B cell (primary cell): ENCODE measurements at regions of chr11 and their contacts with region 1.

Region 1: DNA sequence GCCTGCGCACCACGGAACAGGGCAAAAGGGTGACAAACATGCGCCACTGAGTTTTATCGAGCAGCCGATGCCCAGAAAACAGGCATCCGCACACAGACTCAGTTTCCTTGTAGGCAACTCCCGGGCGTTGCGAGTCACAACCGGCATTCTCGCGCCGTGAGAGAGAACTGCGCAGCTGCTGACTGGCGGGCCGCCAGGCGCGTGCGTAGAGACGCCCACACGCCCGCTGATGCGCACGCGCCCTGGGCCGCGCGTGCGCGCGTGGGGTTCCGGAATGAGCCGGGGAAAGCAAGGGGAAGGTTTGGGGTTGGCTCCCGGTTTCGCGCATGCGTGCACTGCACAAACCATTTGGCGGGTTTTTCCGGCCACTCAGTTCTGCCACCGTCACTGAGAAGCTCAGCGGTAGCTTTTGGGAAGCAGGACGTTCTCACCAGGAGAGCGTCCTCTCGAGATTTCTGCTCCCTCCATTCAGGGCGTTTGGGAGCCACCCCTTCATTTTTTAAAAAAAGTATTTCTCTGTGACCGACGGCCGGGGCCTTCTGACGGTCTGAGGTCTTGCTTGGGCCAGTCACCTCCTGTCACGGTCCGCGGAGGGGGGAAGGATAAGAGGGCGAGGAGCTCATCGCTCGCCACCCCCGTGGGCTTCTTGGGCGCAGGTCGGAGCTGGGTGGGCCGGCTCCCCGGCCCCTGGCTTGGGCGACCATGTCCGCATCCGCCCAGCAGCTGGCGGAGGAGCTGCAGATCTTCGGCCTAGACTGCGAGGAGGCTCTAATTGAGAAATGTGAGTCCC is at the start of gene POLA2:
- DNase-seq: peak; percentile 98
- ATAC-seq: peak; percentile 88
- H3K4me3 ChIP-seq: peak within 1 kb of the TSS; percentile 85 to 97 (median 94)
- H3K4me3 Mint-ChIP-seq: peak within 1 kb of the TSS; percentile 94
- H3K27ac ChIP-seq: peak within 1 kb of the TSS; percentile 88 to 91
- H3K27ac Mint-ChIP-seq: peak within 1 kb of the TSS; percentile 99
- H3K4me1 ChIP-seq: peaks cover 11 to 18% of the 10 kb centered on the region in 2 donors
- H3K4me1 Mint-ChIP-seq: peaks cover 24% of the 10 kb centered on the region
- H3K27me3 ChIP-seq: no peaks in the 10 kb centered on the region
- H3K27me3 Mint-ChIP-seq: no peaks in the 10 kb centered on the region
- CTCF ChIP-seq: no peak
- total RNA-seq, gene POLA2: 28.7 and 33.2 TPM in 2 replicates

Region 2: GRCh38 chr11:65225279-65226102 is 36.3 kb before region 1 on chr11:
- CTCF ChIA-PET with region 1: interaction called, 33 read pairs
- POLR2A ChIA-PET with region 1: no interaction called
- intact Hi-C with region 1: loop called (anchors 2 kb)
- DNase-seq: peak; percentile 73
- ATAC-seq: peak; percentile 81
- H3K4me3 ChIP-seq: peak overlapping the region; percentile 33 to 62 (median 45)
- H3K4me3 Mint-ChIP-seq: peak overlapping the region; percentile 91
- H3K27ac ChIP-seq: no peak overlapping the region
- H3K27ac Mint-ChIP-seq: no peak overlapping the region
- H3K4me1 ChIP-seq: peaks cover 14 to 17% of the 10 kb centered on the region in 2 donors
- H3K4me1 Mint-ChIP-seq: peaks cover 12% of the 10 kb centered on the region
- H3K27me3 ChIP-seq: no peaks in the 10 kb centered on the region
- H3K27me3 Mint-ChIP-seq: no peaks in the 10 kb centered on the region
- CTCF ChIP-seq: peak; percentile 69

Region 3: GRCh38 chr11:65251476-65251875 is 10.3 kb before region 1 on chr11:
- CTCF ChIA-PET with region 1: interaction called, 34 read pairs
- POLR2A ChIA-PET with region 1: no interaction called
- intact Hi-C with region 1: no loop called
- DNase-seq: no peak
- ATAC-seq: no peak
- H3K4me3 ChIP-seq: no peak overlapping the region
- H3K4me3 Mint-ChIP-seq: no peak overlapping the region
- H3K27ac ChIP-seq: no peak overlapping the region
- H3K27ac Mint-ChIP-seq: no peak overlapping the region
- H3K4me1 ChIP-seq: no peaks in the 10 kb centered on the region
- H3K4me1 Mint-ChIP-seq: no peaks in the 10 kb centered on the region
- H3K27me3 ChIP-seq: no peaks in the 10 kb centered on the region
- H3K27me3 Mint-ChIP-seq: no peaks in the 10 kb centered on the region
- CTCF ChIP-seq: no peak

Region 4: DNA sequence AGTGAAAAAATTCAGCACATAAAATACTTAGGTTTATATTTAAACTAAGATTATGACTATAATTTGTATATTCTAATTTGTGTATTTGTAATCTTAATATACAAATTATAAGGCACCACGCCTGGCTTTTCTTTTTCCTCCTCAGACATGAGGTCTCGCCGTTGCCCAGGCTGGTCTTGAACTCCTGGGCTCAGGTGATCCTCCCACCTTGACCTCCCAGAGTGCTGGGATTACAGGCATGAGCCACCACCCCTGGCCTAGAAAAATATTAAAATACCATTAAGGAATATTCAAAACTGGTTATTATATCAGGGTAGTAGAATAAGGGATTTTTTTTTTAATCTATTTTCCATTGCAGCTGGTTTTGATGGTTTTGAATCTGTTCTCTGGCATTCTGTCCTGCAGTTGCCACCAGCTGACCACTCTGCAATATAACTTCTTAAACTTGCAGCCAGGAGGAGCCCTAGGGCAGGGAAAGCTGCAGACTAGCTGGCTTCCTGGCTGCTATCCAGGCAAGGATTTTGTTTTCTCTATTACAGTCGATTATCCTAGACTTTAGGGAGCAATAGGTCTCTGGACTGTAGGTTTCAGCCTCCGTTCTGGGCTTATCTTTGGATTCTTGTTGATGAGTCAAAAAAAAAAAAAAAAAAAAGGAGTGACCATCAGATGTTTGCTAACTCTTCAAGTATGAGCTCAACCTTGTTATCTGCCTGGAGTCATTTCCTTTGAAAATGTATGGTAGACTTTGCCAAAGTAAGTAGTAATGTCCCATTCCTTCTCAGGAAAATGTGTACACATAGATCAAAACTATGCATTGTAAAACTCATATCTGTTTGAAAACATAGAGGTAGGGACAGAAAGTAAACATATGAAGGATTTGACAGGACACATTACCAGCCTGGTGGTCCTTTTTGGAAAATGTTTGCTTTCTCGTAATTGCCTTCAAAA is 13.2 kb after region 1 on chr11:
- CTCF ChIA-PET with region 1: interaction called, 33 read pairs
- POLR2A ChIA-PET with region 1: no interaction called
- intact Hi-C with region 1: no loop called
- DNase-seq: peak; percentile 57
- ATAC-seq: peak; percentile 53
- H3K4me3 ChIP-seq: no peak overlapping the region
- H3K4me3 Mint-ChIP-seq: no peak overlapping the region
- H3K27ac ChIP-seq: no peak overlapping the region
- H3K27ac Mint-ChIP-seq: no peak overlapping the region
- H3K4me1 ChIP-seq: no peaks in the 10 kb centered on the region
- H3K4me1 Mint-ChIP-seq: no peaks in the 10 kb centered on the region
- H3K27me3 ChIP-seq: no peaks in the 10 kb centered on the region
- H3K27me3 Mint-ChIP-seq: no peaks in the 10 kb centered on the region
- CTCF ChIP-seq: peak; percentile 50

Region 5: GRCh38 chr11:65314501-65315203 is 52.9 kb after region 1 on chr11 and contains the start of gene CDC42EP2:
- CTCF ChIA-PET with region 1: interaction called, 21 read pairs
- POLR2A ChIA-PET with region 1: interaction called, 10 read pairs
- intact Hi-C with region 1: loop called (anchors 5 kb)
- DNase-seq: peak; percentile 85
- ATAC-seq: peak; percentile 96
- H3K4me3 ChIP-seq: peak within 1 kb of the TSS; percentile 40 to 85 (median 81)
- H3K4me3 Mint-ChIP-seq: peak within 1 kb of the TSS; percentile 84
- H3K27ac ChIP-seq: peak within 1 kb of the TSS in 1 of 2 donors; percentile 51
- H3K27ac Mint-ChIP-seq: no peak within 1 kb of the TSS
- H3K4me1 ChIP-seq: peaks cover 8 to 17% of the 10 kb centered on the region in 2 donors
- H3K4me1 Mint-ChIP-seq: peaks cover 10% of the 10 kb centered on the region
- H3K27me3 ChIP-seq: peaks cover 0 to 12% (median 5%) of the 10 kb centered on the region in 4 experiments
- H3K27me3 Mint-ChIP-seq: peaks cover 9% of the 10 kb centered on the region
- CTCF ChIP-seq: no peak
- total RNA-seq, gene CDC42EP2: 1.1 and 1.5 TPM in 2 replicates